ENCODE measurements at regions of chr12 and their contacts with region 1.

Region 1: DNA sequence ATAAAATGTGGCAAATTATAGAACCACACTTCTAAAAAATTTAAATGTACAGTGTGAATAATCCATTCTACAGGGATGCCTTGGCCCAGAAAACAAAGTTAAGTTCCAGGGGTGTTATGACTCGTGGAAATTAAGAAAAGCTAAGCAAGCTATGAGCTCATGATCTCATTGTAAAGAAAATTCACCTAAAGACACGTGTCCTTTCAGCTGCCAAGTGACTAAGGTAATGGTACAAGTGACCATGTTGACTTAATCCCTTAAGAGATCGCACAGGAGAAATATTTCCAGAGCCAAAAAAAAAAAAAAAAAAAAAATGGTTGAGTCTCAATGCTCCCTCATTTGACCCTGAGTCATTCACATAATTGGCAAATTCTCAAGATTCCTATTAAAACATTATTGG is 51.4 kb upstream of the ANO2 start:
- DNase-seq: peak; percentile 32
- H3K4me3 ChIP-seq: no peak overlapping the region
- H3K27ac ChIP-seq: no peak overlapping the region
- H3K4me1 ChIP-seq: peaks cover 2% of the 10 kb centered on the region
- H3K27me3 ChIP-seq: no peaks in the 10 kb centered on the region
- CTCF ChIP-seq: no peak

Region 2: DNA sequence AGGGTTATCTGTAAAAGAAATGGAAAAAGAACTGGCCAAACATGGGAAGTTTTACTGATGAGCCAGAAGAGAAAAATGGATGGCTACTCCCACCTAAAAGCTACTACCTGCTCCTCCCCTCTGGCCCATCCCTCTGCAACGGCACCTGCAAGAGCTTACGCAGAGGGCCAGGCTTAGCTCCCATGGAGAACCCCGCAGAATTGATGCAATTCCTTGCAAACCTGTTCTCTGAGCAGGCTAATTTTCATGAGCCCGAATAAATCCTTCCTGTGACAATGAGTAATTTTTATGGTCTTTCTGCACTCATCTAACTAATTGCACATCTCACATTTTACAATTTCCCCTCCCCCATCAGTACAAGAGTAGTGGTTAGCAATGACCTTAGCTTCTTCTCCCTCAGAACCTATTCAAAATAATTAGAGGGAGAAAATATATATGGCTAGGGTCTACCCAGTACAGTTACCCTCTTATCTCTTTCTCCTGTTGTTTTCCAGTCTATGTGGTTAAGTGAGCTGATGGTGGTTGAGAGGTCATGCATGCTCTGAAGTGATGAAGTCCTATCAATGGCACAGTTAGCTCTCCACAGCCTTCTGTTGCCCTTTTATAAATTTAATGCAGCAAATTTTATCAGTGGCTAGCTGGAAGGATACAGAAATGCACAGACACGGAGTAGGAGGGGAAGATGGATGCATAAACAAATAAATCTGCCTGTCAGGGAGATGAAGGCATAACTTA is 632.3 kb before region 1 on chr12:
- CTCF ChIA-PET with region 1: no interaction called
- dilution Hi-C with region 1: no loop called
- in situ Hi-C with region 1: no loop called
- intact Hi-C with region 1: no loop called
- DNase-seq: no peak
- H3K4me3 ChIP-seq: no peak overlapping the region
- H3K27ac ChIP-seq: no peak overlapping the region
- H3K4me1 ChIP-seq: no peaks in the 10 kb centered on the region
- H3K27me3 ChIP-seq: no peaks in the 10 kb centered on the region
- CTCF ChIP-seq: no peak

Region 3: GRCh38 chr12:5945071-5946008 is 51.1 kb before region 1 on chr12 and contains the start of gene ANO2:
- CTCF ChIA-PET with region 1: no interaction called
- dilution Hi-C with region 1: no loop called
- in situ Hi-C with region 1: no loop called
- intact Hi-C with region 1: no loop called
- DNase-seq: no peak
- H3K4me3 ChIP-seq: peak within 1 kb of the TSS in 2 of 3 experiments; percentile 27
- H3K27ac ChIP-seq: no peak within 1 kb of the TSS
- H3K4me1 ChIP-seq: no peaks in the 10 kb centered on the region
- H3K27me3 ChIP-seq: peaks cover 29% of the 10 kb centered on the region
- CTCF ChIP-seq: no peak
- total RNA-seq, gene ANO2: under 0.01 TPM in 1 of 2 donors, not detected in the other

Region 4: GRCh38 chr12:6033546-6033945 is 37.1 kb after region 1 on chr12:
- CTCF ChIA-PET with region 1: no interaction called
- dilution Hi-C with region 1: loop called (anchors 5 kb)
- in situ Hi-C with region 1: no loop called
- intact Hi-C with region 1: no loop called
- DNase-seq: no peak
- H3K4me3 ChIP-seq: no peak overlapping the region
- H3K27ac ChIP-seq: no peak overlapping the region
- H3K4me1 ChIP-seq: no peaks in the 10 kb centered on the region
- H3K27me3 ChIP-seq: no peaks in the 10 kb centered on the region
- CTCF ChIP-seq: no peak